ENCODE measurements at regions of chr3 and their contacts with region 1.

Region 1: DNA sequence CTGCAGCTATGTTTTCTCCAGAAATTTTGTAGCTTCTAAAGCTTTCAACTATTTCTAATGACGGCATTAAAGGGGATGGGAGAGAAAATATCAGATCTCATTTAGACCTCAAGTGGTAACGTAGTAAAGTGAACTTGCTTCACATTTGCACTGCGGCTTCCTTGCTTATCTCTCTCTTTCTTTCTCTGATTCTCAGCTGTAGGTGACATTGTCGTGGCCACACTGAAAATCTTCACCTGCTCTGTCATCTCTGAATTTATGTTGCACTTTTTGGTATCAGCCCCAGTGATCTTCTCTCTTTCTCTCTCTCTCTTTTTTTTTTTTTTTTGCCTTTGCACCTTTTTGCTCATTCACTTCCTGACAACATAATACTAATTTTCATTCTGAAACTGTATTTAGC is 254.1 kb upstream of the SATB1 start:
- DNase-seq: peak in 7 of 14 experiments; percentile 3 to 75 (median 39)
- ATAC-seq: peak; percentile 87
- H3K4me3 ChIP-seq: peak overlapping the region; percentile 12
- H3K4me3 Mint-ChIP-seq: peak overlapping the region; percentile 57
- H3K27ac ChIP-seq: peak overlapping the region in 1 of 2 donors; percentile 33
- H3K27ac Mint-ChIP-seq: peak overlapping the region; percentile 73
- H3K4me1 ChIP-seq: peaks cover 13% of the 10 kb centered on the region
- H3K4me1 Mint-ChIP-seq: peaks cover 75% of the 10 kb centered on the region
- H3K27me3 ChIP-seq: no peaks in the 10 kb centered on the region
- H3K27me3 Mint-ChIP-seq: no peaks in the 10 kb centered on the region
- CTCF ChIP-seq: no peak

Region 2: GRCh38 chr3:18725668-18726407 is 46.6 kb after region 1 on chr3:
- CTCF ChIA-PET with region 1: no interaction called
- POLR2A ChIA-PET with region 1: interaction called, 8 read pairs
- intact Hi-C with region 1: loop called in 1 of 2 experiments (anchors 5 kb)
- DNase-seq: peak in 6 of 14 experiments; percentile 16 to 82 (median 54)
- ATAC-seq: peak; percentile 84
- H3K4me3 ChIP-seq: peak overlapping the region; percentile 26
- H3K4me3 Mint-ChIP-seq: peak overlapping the region; percentile 64
- H3K27ac ChIP-seq: peak overlapping the region; percentile 69 to 83
- H3K27ac Mint-ChIP-seq: peak overlapping the region; percentile 87
- H3K4me1 ChIP-seq: peaks cover 55% of the 10 kb centered on the region
- H3K4me1 Mint-ChIP-seq: peaks cover 74% of the 10 kb centered on the region
- H3K27me3 ChIP-seq: no peaks in the 10 kb centered on the region
- H3K27me3 Mint-ChIP-seq: no peaks in the 10 kb centered on the region
- CTCF ChIP-seq: no peak

Region 3: GRCh38 chr3:19065027-19065426 is 385.8 kb after region 1 on chr3:
- CTCF ChIA-PET with region 1: no interaction called
- POLR2A ChIA-PET with region 1: no interaction called
- intact Hi-C with region 1: no loop called
- DNase-seq: peak in 2 of 14 experiments; percentile 11 to 19
- ATAC-seq: no peak
- H3K4me3 ChIP-seq: no peak overlapping the region
- H3K4me3 Mint-ChIP-seq: no peak overlapping the region
- H3K27ac ChIP-seq: no peak overlapping the region
- H3K27ac Mint-ChIP-seq: no peak overlapping the region
- H3K4me1 ChIP-seq: no peaks in the 10 kb centered on the region
- H3K4me1 Mint-ChIP-seq: no peaks in the 10 kb centered on the region
- H3K27me3 ChIP-seq: no peaks in the 10 kb centered on the region
- H3K27me3 Mint-ChIP-seq: no peaks in the 10 kb centered on the region
- CTCF ChIP-seq: peak; percentile 31